Activated CD4-positive, alpha-beta T cell treated with anti-CD3 and anti-CD28 coated beads, Interleukin-2, amount 10 ng/mL, durations not matched to agents 7 days and 5 days (primary cell): ENCODE measurements at regions of chr1 and their contacts with region 1.

Region 1: GRCh38 chr1:179121159-179121938 is 39.5 kb downstream of the TOR3A start:
- DNase-seq: peak; percentile 65
- H3K4me3 Mint-ChIP-seq: no peak overlapping the region
- H3K27ac Mint-ChIP-seq: peak overlapping the region; percentile 46
- H3K4me1 Mint-ChIP-seq: peaks cover 3% of the 10 kb centered on the region
- H3K27me3 Mint-ChIP-seq: no peaks in the 10 kb centered on the region

Region 2: GRCh38 chr1:178324003-178324402 is 797.3 kb before region 1 on chr1:
- CTCF ChIA-PET with region 1: no interaction called
- POLR2A ChIA-PET with region 1: interaction called, 11 read pairs
- DNase-seq: no peak
- H3K4me3 Mint-ChIP-seq: no peak overlapping the region
- H3K27ac Mint-ChIP-seq: no peak overlapping the region
- H3K4me1 Mint-ChIP-seq: no peaks in the 10 kb centered on the region
- H3K27me3 Mint-ChIP-seq: no peaks in the 10 kb centered on the region